ENCODE measurements at regions of chr9 and their contacts with region 1.

Region 1: GRCh38 chr9:125241000-125241862 is at the start of gene HSPA5:
- DNase-seq: peak; percentile 97 to 99
- H3K4me3 ChIP-seq: peak within 1 kb of the TSS; percentile 92
- H3K27ac ChIP-seq: peak within 1 kb of the TSS; percentile 95
- H3K4me1 ChIP-seq: peaks cover 52% of the 10 kb centered on the region
- H3K27me3 ChIP-seq: no peaks in the 10 kb centered on the region
- CTCF ChIP-seq: no peak
- total RNA-seq, gene HSPA5: 185 and 235 TPM in 2 replicates

Region 2: DNA sequence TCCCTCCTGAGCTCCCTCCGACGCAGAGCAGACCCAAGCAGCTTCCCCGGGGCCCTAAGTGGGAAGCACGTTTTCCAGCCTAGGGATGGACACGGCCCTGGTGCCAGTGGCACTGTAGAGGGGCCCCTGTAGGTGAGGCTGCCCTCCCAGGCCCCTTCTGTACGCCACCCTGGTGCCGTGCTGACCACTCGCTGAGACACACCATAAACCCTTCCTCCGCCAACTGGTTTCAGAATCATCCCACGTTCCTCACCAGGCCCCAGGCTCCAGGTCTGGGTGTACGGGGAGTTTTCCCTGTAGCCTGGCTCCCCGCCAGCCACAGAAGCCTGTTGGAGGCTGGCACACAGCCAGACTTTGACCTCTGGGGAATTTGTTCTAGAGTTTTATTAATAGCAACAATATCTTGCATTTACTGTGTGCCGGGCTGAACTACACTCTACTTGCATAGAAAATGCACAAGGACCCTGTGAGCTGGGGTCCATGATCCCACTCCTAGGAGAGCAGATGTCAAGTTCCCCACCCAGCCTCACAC is 406.1 kb before region 1 on chr9:
- CTCF ChIA-PET with region 1: no interaction called
- POLR2A ChIA-PET with region 1: no interaction called
- intact Hi-C with region 1: no loop called
- DNase-seq: peak; percentile 66 to 84
- H3K4me3 ChIP-seq: peak overlapping the region; percentile 2; the same call in 1 of the 2 replicates
- H3K27ac ChIP-seq: peak overlapping the region; percentile 59
- H3K4me1 ChIP-seq: peaks cover 20% of the 10 kb centered on the region
- H3K27me3 ChIP-seq: no peaks in the 10 kb centered on the region
- CTCF ChIP-seq: no peak

Region 3: GRCh38 chr9:125200210-125201047 is 40.8 kb before region 1 on chr9 and contains the start of gene RABEPK:
- CTCF ChIA-PET with region 1: no interaction called
- POLR2A ChIA-PET with region 1: interaction called, 4 read pairs
- intact Hi-C with region 1: loop called (anchors 1 kb)
- DNase-seq: peak; percentile 83 to 96
- H3K4me3 ChIP-seq: peak within 1 kb of the TSS; percentile 65
- H3K27ac ChIP-seq: peak within 1 kb of the TSS; percentile 54
- H3K4me1 ChIP-seq: peaks cover 7% of the 10 kb centered on the region
- H3K27me3 ChIP-seq: no peaks in the 10 kb centered on the region
- CTCF ChIP-seq: no peak
- total RNA-seq, gene RABEPK: 28.9 and 29.7 TPM in 2 replicates

Region 4: GRCh38 chr9:125227761-125228160 is 13.5 kb before region 1 on chr9:
- CTCF ChIA-PET with region 1: no interaction called
- POLR2A ChIA-PET with region 1: interaction called, 17 read pairs
- intact Hi-C with region 1: no loop called
- DNase-seq: no peak
- H3K4me3 ChIP-seq: no peak overlapping the region
- H3K27ac ChIP-seq: no peak overlapping the region
- H3K4me1 ChIP-seq: no peaks in the 10 kb centered on the region
- H3K27me3 ChIP-seq: no peaks in the 10 kb centered on the region
- CTCF ChIP-seq: no peak

Region 5: GRCh38 chr9:125261501-125262293 is 20.5 kb after region 1 on chr9 and contains the start of gene GAPVD1:
- CTCF ChIA-PET with region 1: interaction called, 3 read pairs
- POLR2A ChIA-PET with region 1: interaction called, 7 read pairs
- intact Hi-C with region 1: loop called (anchors 1 kb)
- DNase-seq: peak; percentile 88 to 95
- H3K4me3 ChIP-seq: peak within 1 kb of the TSS; percentile 78
- H3K27ac ChIP-seq: peak within 1 kb of the TSS; percentile 83
- H3K4me1 ChIP-seq: peaks cover 24% of the 10 kb centered on the region
- H3K27me3 ChIP-seq: no peaks in the 10 kb centered on the region
- CTCF ChIP-seq: no peak; the same call in 1 of the 2 replicates
- total RNA-seq, gene GAPVD1: 58.2 and 70.3 TPM in 2 replicates

Region 6: GRCh38 chr9:125272697-125273096 is 31.5 kb after region 1 on chr9:
- CTCF ChIA-PET with region 1: no interaction called
- POLR2A ChIA-PET with region 1: interaction called, 11 read pairs
- intact Hi-C with region 1: no loop called
- DNase-seq: peak; percentile 34 to 89
- H3K4me3 ChIP-seq: peak overlapping the region; percentile 28; the same call in 1 of the 2 replicates
- H3K27ac ChIP-seq: peak overlapping the region; percentile 53
- H3K4me1 ChIP-seq: peaks cover 25% of the 10 kb centered on the region
- H3K27me3 ChIP-seq: no peaks in the 10 kb centered on the region
- CTCF ChIP-seq: no peak

Region 7: DNA sequence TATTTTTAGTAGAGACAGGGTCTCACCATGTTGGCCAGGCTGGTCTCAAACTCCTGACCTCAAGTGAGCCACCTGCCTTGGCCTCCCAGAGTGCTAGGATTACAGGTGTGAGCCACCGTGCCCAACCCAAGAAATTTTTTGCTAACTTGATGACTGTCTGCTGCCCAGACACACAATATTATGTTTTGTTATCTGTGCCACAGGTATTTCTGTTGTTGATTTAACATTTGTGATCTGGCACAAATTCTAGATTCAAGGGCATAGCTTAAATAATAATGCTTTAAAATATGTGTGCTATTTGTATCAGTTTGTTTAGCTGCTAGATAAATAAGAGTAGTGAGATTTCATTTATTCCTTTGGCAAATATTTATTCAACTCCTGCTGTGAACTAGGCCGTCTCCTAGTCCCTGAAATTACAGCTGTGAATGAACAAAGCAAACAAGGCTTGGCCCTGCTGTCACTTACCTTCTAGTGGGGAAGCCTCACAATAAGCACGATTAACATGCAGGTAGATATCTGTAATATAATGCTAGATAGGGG is 55.7 kb after region 1 on chr9:
- CTCF ChIA-PET with region 1: no interaction called
- POLR2A ChIA-PET with region 1: interaction called, 8 read pairs
- intact Hi-C with region 1: loop called (anchors 1 kb)
- DNase-seq: peak; percentile 44 to 97
- H3K4me3 ChIP-seq: no peak overlapping the region
- H3K27ac ChIP-seq: peak overlapping the region; percentile 63
- H3K4me1 ChIP-seq: peaks cover 27% of the 10 kb centered on the region
- H3K27me3 ChIP-seq: no peaks in the 10 kb centered on the region
- CTCF ChIP-seq: no peak

Measured in PC-9 (cell line).